CD8-positive, alpha-beta memory T cell (primary cell): ENCODE measurements at regions of chr20 and their contacts with region 1.

Region 1: DNA sequence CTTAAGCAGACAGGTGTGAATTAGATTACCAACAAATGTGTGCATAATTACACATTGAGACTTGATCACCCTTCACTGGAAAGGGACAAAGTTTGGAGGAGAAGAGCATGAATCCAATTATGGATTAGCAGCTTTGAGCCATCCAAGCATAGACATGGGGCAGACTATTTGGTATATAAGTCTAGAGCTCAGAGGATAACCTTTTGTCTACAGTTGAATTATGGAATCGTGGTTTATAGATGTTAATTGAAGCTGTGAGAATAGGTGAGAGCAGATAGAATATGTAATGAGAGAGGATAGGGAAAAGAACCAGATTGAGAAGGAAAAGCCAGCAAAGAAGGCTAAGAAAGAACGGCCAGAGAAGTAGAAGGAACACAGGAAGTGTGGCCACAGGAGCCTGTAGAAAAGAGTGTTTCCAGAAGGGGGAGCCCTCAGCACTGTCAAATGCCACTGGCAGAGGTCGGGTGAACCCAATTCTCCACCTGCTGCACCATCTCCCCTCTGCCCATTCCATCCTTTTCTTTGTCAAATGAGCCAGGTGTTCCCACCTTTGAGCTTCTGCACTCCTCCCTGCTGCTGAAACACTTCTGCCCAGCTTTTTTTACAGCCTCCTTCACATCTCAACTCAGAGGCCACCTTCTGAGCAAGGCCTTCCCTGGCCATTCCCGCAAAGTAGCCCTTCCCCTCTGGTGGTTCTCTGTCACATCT is 7.3 kb downstream of the DNTTIP1 start:
- DNase-seq: peak; percentile 40 to 73 (median 49)
- H3K4me3 ChIP-seq: no peak overlapping the region
- H3K4me3 Mint-ChIP-seq: no peak overlapping the region
- H3K27ac ChIP-seq: no peak overlapping the region
- H3K27ac Mint-ChIP-seq: peak overlapping the region; percentile 10 to 94 (median 66)
- H3K4me1 ChIP-seq: no peaks in the 10 kb centered on the region
- H3K4me1 Mint-ChIP-seq: peaks cover 10% of the 10 kb centered on the region in 3 donors
- H3K27me3 ChIP-seq: no peaks in the 10 kb centered on the region
- H3K27me3 Mint-ChIP-seq: no peaks in the 10 kb centered on the region

Region 2: GRCh38 chr20:45450097-45450818 is 348.8 kb before region 1 on chr20:
- CTCF ChIA-PET with region 1: no interaction called
- POLR2A ChIA-PET with region 1: no interaction called
- DNase-seq: peak in 2 of 5 donors; percentile 30 to 32
- H3K4me3 ChIP-seq: no peak overlapping the region
- H3K4me3 Mint-ChIP-seq: no peak overlapping the region
- H3K27ac ChIP-seq: no peak overlapping the region
- H3K27ac Mint-ChIP-seq: no peak overlapping the region
- H3K4me1 ChIP-seq: no peaks in the 10 kb centered on the region
- H3K4me1 Mint-ChIP-seq: peaks cover 5 to 9% (median 8%) of the 10 kb centered on the region in 3 donors
- H3K27me3 ChIP-seq: no peaks in the 10 kb centered on the region
- H3K27me3 Mint-ChIP-seq: peaks cover 8 to 21% of the 10 kb centered on the region in 2 donors

Region 3: DNA sequence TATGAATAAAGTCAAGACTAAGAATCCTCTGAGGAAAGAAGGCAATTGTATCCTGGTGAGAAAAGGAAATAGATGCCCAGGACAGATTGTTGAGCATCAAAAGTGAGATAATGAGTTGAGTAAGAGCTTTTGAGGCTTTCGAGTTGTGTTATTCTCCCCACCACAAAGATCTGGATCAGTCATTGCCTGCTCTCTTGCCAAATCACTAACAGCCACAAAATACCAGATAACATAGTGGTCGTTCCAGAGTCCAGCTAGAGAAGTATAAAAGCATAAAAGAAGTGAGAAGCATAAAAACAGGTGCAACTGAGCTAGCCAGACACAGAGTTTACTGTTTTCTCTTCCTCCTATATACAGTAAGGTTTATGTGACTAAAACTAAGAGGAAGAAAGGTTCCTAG is 72.0 kb before region 1 on chr20:
- CTCF ChIA-PET with region 1: no interaction called
- POLR2A ChIA-PET with region 1: no interaction called
- DNase-seq: no peak
- H3K4me3 ChIP-seq: no peak overlapping the region
- H3K4me3 Mint-ChIP-seq: no peak overlapping the region
- H3K27ac ChIP-seq: no peak overlapping the region
- H3K27ac Mint-ChIP-seq: no peak overlapping the region
- H3K4me1 ChIP-seq: no peaks in the 10 kb centered on the region
- H3K4me1 Mint-ChIP-seq: no peaks in the 10 kb centered on the region
- H3K27me3 ChIP-seq: no peaks in the 10 kb centered on the region
- H3K27me3 Mint-ChIP-seq: peaks cover 5 to 46% of the 10 kb centered on the region in 2 donors

Region 4: GRCh38 chr20:45810191-45810970 is 11.3 kb after region 1 on chr20:
- CTCF ChIA-PET with region 1: interaction called, 15 read pairs
- POLR2A ChIA-PET with region 1: no interaction called
- DNase-seq: no peak
- H3K4me3 ChIP-seq: no peak overlapping the region
- H3K4me3 Mint-ChIP-seq: no peak overlapping the region
- H3K27ac ChIP-seq: peak overlapping the region; percentile 38
- H3K27ac Mint-ChIP-seq: peak overlapping the region in 3 of 8 donors; percentile 32 to 77 (median 44)
- H3K4me1 ChIP-seq: peaks cover 4% of the 10 kb centered on the region
- H3K4me1 Mint-ChIP-seq: peaks cover 17 to 21% (median 19%) of the 10 kb centered on the region in 3 donors
- H3K27me3 ChIP-seq: no peaks in the 10 kb centered on the region
- H3K27me3 Mint-ChIP-seq: peaks cover 0 to 2% of the 10 kb centered on the region in 2 donors

Region 5: GRCh38 chr20:45963059-45964005 is 164.2 kb after region 1 on chr20:
- CTCF ChIA-PET with region 1: interaction called, 11 read pairs
- POLR2A ChIA-PET with region 1: no interaction called
- DNase-seq: peak in 2 of 5 donors; percentile 23 to 41
- H3K4me3 ChIP-seq: no peak overlapping the region
- H3K4me3 Mint-ChIP-seq: no peak overlapping the region
- H3K27ac ChIP-seq: no peak overlapping the region
- H3K27ac Mint-ChIP-seq: peak overlapping the region in 6 of 8 donors; percentile 6 to 76 (median 50)
- H3K4me1 ChIP-seq: no peaks in the 10 kb centered on the region
- H3K4me1 Mint-ChIP-seq: peaks cover 0 to 3% (median 0%) of the 10 kb centered on the region in 3 donors
- H3K27me3 ChIP-seq: no peaks in the 10 kb centered on the region
- H3K27me3 Mint-ChIP-seq: no peaks in the 10 kb centered on the region